ENCODE measurements at regions of chr7 and their contacts with region 1.

Region 1: GRCh38 chr7:45160417-45160881 is 2.9 kb downstream of the RAMP3 start:
- DNase-seq: no peak
- ATAC-seq: peak in 7 of 8 donors; percentile 7 to 47 (median 30)
- H3K4me3 ChIP-seq: peak overlapping the region in 7 of 10 donors; percentile 3 to 81 (median 66)
- H3K27ac ChIP-seq: peak overlapping the region in 9 of 10 donors; percentile 44 to 96 (median 89)
- H3K4me1 ChIP-seq: peaks cover 0 to 29% (median 5%) of the 10 kb centered on the region in 9 donors
- H3K27me3 ChIP-seq: peaks cover 0 to 27% (median 9%) of the 10 kb centered on the region in 7 donors
- CTCF ChIP-seq: no peak

Region 2: GRCh38 chr7:44824894-44825526 is 335.4 kb before region 1 on chr7:
- intact Hi-C with region 1: no loop called
- DNase-seq: no peak
- ATAC-seq: peak in 2 of 8 donors; percentile 13 to 28
- H3K4me3 ChIP-seq: no peak overlapping the region
- H3K27ac ChIP-seq: peak overlapping the region in 1 of 10 donors; percentile 29
- H3K4me1 ChIP-seq: peaks cover 0 to 21% (median 0%) of the 10 kb centered on the region in 9 donors
- H3K27me3 ChIP-seq: no peaks in the 10 kb centered on the region
- CTCF ChIP-seq: no peak

Region 3: GRCh38 chr7:45080265-45080962 is 80.0 kb before region 1 on chr7:
- intact Hi-C with region 1: no loop called
- DNase-seq: no peak
- ATAC-seq: peak in 1 of 8 donors; percentile 20
- H3K4me3 ChIP-seq: no peak overlapping the region
- H3K27ac ChIP-seq: no peak overlapping the region
- H3K4me1 ChIP-seq: peaks cover 0 to 7% (median 0%) of the 10 kb centered on the region in 9 donors
- H3K27me3 ChIP-seq: no peaks in the 10 kb centered on the region
- CTCF ChIP-seq: no peak

Region 4: DNA sequence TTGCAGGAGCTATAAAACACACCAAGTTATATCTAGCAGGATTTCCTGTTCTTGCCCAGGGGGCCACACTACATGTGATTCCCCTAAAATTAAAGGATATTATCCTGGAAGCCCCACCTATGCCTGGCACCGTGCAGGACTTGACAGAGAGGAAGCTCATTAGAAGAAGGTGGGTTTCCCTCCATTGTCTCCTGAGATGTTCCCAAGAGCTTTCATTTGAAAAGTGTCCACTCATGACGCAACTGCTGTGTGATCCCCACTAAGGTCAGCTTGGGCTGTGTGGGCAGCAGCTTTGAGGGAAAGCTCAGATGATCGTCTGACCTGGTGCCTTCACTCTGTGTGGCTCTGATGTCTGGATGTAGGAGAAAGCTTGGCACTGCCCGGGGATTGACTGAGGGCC is 50.6 kb after region 1 on chr7:
- intact Hi-C with region 1: loop called in 5 of 10 experiments (anchors 2 to 5 kb)
- DNase-seq: peak in 1 of 2 donors; percentile 71
- ATAC-seq: peak; percentile 86 to 97 (median 92)
- H3K4me3 ChIP-seq: no peak overlapping the region
- H3K27ac ChIP-seq: peak overlapping the region; percentile 58 to 88 (median 64)
- H3K4me1 ChIP-seq: peaks cover 5 to 34% (median 11%) of the 10 kb centered on the region in 9 donors
- H3K27me3 ChIP-seq: peaks cover 0 to 21% (median 7%) of the 10 kb centered on the region in 7 donors
- CTCF ChIP-seq: no peak

Region 5: GRCh38 chr7:45240273-45240771 is 79.9 kb after region 1 on chr7:
- intact Hi-C with region 1: loop called in 4 of 10 experiments (anchors 5 kb)
- DNase-seq: peak; percentile 51 to 69
- ATAC-seq: peak; percentile 63 to 91 (median 84)
- H3K4me3 ChIP-seq: no peak overlapping the region
- H3K27ac ChIP-seq: peak overlapping the region in 9 of 10 donors; percentile 40 to 90 (median 72)
- H3K4me1 ChIP-seq: peaks cover 0 to 50% (median 9%) of the 10 kb centered on the region in 9 donors
- H3K27me3 ChIP-seq: peaks cover 0 to 11% (median 4%) of the 10 kb centered on the region in 7 donors
- CTCF ChIP-seq: no peak

Region 6: GRCh38 chr7:45259966-45260646 is 99.7 kb after region 1 on chr7:
- intact Hi-C with region 1: loop called in 6 of 10 experiments (anchors 1 to 5 kb)
- DNase-seq: peak; percentile 43 to 71
- ATAC-seq: peak; percentile 56 to 95 (median 82)
- H3K4me3 ChIP-seq: peak overlapping the region in 1 of 10 donors; percentile 17
- H3K27ac ChIP-seq: no peak overlapping the region
- H3K4me1 ChIP-seq: peaks cover 0 to 15% (median 0%) of the 10 kb centered on the region in 9 donors
- H3K27me3 ChIP-seq: peaks cover 0 to 25% (median 0%) of the 10 kb centered on the region in 7 donors
- CTCF ChIP-seq: peak; percentile 95 to 99 (median 98)

Region 7: DNA sequence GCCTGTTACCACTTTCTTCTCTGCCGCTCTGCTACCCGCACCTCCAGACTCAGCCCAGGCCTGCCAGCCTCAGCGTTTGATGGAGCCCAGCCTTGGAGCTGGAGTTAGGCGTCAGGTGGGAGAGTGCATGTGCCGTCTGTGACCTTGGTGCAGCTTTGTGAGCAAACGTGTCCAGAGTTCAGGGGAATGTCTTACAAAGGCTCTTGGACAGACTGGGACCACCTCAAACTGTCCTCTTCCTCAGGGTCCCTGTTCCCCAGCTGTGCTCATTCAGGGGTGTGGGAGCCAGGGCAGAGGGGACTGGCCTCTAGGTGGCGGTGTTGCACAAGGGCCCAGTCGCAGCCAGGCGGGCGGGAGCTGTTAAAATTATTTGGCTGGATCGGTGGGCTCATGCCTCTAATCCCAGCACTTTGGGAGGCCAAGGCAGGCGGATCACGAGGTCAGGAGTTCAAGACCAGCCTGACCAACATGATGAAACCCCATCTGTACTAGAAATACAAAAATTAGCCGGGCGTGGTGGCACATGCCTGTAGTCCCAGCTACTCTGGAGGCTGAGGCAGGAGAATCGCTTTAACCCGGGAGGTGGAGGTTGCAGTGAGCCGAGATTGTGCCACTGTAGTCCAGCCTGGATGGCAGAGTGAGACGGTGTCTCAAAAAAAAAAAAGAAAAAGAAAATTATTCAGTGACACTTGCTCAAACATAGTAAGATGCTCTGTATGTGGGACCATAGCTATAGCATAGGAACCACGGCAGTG is 502.9 kb after region 1 on chr7:
- intact Hi-C with region 1: loop called in 1 of 10 experiments (anchors 10 kb)
- DNase-seq: peak; percentile 18 to 57
- ATAC-seq: peak in 7 of 8 donors; percentile 46 to 70 (median 61)
- H3K4me3 ChIP-seq: no peak overlapping the region
- H3K27ac ChIP-seq: no peak overlapping the region
- H3K4me1 ChIP-seq: no peaks in the 10 kb centered on the region
- H3K27me3 ChIP-seq: no peaks in the 10 kb centered on the region
- CTCF ChIP-seq: peak; percentile 47 to 77 (median 72)

Region 8: DNA sequence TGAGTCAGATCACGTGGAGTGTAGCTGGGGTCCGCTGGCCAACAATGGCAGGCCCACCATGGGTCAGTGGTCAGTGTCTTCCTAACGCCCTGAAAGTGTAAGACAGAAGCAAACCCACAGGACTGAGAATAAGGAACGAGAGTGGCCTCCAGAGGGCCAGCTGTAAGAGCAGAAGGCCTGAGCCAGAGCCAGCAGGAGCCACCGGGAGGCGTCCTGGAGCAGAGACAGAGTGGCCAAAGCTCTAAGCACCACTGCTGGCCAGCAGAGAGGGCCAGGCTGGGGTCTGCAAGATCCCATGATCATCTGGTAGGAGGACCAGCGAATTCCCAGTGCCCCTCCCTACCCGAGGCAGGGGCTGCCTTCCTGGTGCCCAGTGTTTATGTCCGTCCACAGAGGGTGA is 703.3 kb after region 1 on chr7:
- intact Hi-C with region 1: loop called in 1 of 10 experiments (anchors 10 kb)
- DNase-seq: no peak
- ATAC-seq: no peak
- H3K4me3 ChIP-seq: no peak overlapping the region
- H3K27ac ChIP-seq: no peak overlapping the region
- H3K4me1 ChIP-seq: no peaks in the 10 kb centered on the region
- H3K27me3 ChIP-seq: peaks cover 0 to 37% (median 26%) of the 10 kb centered on the region in 7 donors
- CTCF ChIP-seq: no peak

Measured in heart right ventricle (tissue), 16 donors.